Right cardiac atrium (tissue), 5 donors: ENCODE measurements at regions of chr1 and their contacts with region 1.

Region 1: DNA sequence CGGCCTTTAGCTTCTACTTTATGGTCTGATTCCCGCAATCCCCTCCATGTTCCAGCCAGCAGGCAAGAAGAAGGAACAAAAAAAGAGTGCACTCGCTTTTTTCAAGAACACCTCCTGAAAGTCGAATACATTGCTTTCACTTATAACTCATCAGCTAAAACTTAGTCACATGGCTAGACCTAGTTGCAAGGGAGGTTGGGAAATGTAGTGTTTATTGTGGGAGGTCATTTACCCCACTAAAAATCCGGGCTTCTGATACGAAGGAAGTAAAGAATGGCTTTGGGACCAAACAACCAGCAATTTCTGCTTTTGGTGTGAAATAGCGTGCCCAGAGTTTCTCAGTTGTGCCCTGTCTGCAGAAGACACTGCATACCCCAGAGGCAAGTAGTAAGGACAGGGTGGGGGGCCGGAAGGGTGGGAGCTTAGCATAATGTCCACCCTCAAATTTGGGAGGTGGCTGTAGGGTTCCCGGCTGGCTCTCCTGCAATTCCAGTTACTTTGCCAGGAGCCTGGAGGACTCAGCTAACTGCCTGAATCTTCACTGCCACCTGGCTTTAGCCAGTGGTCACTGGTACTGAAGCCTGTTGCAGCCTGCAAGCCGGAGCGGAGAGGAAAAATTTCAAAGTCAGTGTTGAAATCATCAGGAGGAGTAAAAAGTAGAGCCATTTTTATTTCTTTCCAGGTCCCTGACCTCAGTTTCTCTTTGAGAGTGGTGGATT is 57.7 kb upstream of the F3 start:
- DNase-seq: peak in 1 of 3 donors; percentile 66
- ATAC-seq: peak; percentile 68 to 84
- H3K4me3 ChIP-seq: no peak overlapping the region
- H3K27ac ChIP-seq: no peak overlapping the region
- H3K4me1 ChIP-seq: no peaks in the 10 kb centered on the region
- H3K27me3 ChIP-seq: no peaks in the 10 kb centered on the region

Region 2: DNA sequence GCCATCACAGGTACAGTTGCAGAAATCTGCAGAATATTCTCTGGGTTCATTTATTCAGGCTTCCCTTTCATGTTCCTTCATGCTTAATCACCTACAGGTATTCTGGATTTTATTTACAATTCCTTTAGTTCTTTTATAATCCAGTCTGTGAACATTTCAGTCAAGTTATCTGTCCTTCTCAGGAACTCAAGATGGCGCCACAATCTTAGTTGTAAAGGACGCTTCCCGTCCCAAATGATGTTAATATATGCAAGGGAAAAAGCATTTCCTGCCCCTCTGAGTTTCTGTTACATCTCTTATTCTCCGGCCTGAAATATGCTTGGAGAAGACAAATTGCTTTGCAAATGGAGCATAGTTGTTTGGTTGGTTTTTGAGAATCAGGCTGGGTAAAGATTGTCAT is 77.0 kb before region 1 on chr1:
- intact Hi-C with region 1: loop called in 1 of 4 experiments (anchors 5 kb)
- DNase-seq: no peak
- ATAC-seq: peak; percentile 60 to 61
- H3K4me3 ChIP-seq: no peak overlapping the region
- H3K27ac ChIP-seq: no peak overlapping the region
- H3K4me1 ChIP-seq: no peaks in the 10 kb centered on the region
- H3K27me3 ChIP-seq: no peaks in the 10 kb centered on the region

Region 3: DNA sequence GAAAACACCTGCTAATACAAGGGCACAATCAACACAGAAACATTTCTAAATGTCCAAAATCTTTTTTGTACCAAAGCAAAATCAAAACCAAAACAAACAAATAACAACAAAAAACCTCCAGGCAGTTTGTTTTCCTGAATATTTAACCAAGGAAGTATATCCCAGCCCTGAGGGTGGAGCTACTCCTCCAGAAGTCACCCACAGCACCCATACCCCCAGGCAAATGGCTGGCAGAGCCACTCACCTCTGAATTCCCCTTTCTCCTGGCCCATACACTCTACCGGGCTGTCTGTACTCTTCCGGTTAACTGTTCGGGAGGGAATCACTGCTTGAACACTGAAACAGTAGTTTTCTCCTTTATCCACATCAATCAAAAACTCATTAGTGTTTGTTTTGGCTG is 67.2 kb before region 1 on chr1:
- intact Hi-C with region 1: loop called in 1 of 4 experiments (anchors 10 kb)
- DNase-seq: no peak
- ATAC-seq: no peak
- H3K4me3 ChIP-seq: no peak overlapping the region
- H3K27ac ChIP-seq: no peak overlapping the region
- H3K4me1 ChIP-seq: no peaks in the 10 kb centered on the region
- H3K27me3 ChIP-seq: no peaks in the 10 kb centered on the region